AG04449 (cell line): ENCODE measurements at regions of chr5 and their contacts with region 1.

Region 1: GRCh38 chr5:131610198-131611063 is 24.6 kb downstream of the RAPGEF6 start:
- DNase-seq: peak; percentile 85
- H3K4me3 ChIP-seq: no peak overlapping the region
- CTCF ChIP-seq: no peak

Region 2: DNA sequence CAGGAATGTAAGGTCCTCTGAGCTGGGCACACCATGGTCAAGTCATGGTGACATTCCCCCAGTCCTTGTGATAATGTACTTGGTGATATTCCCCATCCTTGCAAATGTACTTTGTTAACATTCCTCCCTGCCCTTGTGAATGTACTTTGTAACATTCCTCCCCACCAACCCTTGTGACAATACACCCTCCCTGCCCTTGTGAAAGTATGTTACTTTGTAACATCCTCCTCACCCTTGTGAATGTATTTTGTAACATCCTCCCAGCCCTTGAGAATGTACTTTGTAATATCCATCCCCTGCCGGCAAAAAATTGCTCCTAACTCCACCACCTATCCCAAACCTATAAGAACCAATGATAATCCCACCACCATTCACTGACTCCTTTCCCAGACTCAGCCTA is 28.7 kb before region 1 on chr5:
- CTCF ChIA-PET with region 1: no interaction called
- POLR2A ChIA-PET with region 1: no interaction called
- DNase-seq: no peak
- H3K4me3 ChIP-seq: no peak overlapping the region
- CTCF ChIP-seq: no peak

Region 3: GRCh38 chr5:131628990-131629389 is 18.6 kb after region 1 on chr5:
- CTCF ChIA-PET with region 1: interaction called, 13 read pairs
- POLR2A ChIA-PET with region 1: no interaction called
- DNase-seq: no peak
- H3K4me3 ChIP-seq: no peak overlapping the region
- CTCF ChIP-seq: no peak